Naive thymus-derived CD4-positive, alpha-beta T cell (primary cell): ENCODE measurements at regions of chr17 and their contacts with region 1.

Region 1: GRCh38 chr17:5249615-5250014 is 15.0 kb upstream of the SCIMP start:
- DNase-seq: peak in 8 of 9 donors; percentile 38 to 71 (median 64)
- ATAC-seq: peak; percentile 95
- H3K4me3 ChIP-seq: no peak overlapping the region
- H3K4me3 Mint-ChIP-seq: peak overlapping the region in 6 of 10 donors; percentile 4 to 21 (median 9)
- H3K27ac ChIP-seq: no peak overlapping the region
- H3K27ac Mint-ChIP-seq: peak overlapping the region in 8 of 9 donors; percentile 9 to 79 (median 53)
- H3K4me1 ChIP-seq: peaks cover 4 to 5% of the 10 kb centered on the region in 2 donors
- H3K4me1 Mint-ChIP-seq: peaks cover 1 to 17% (median 10%) of the 10 kb centered on the region in 7 donors
- H3K27me3 ChIP-seq: no peaks in the 10 kb centered on the region
- H3K27me3 Mint-ChIP-seq: no peaks in the 10 kb centered on the region

Region 2: DNA sequence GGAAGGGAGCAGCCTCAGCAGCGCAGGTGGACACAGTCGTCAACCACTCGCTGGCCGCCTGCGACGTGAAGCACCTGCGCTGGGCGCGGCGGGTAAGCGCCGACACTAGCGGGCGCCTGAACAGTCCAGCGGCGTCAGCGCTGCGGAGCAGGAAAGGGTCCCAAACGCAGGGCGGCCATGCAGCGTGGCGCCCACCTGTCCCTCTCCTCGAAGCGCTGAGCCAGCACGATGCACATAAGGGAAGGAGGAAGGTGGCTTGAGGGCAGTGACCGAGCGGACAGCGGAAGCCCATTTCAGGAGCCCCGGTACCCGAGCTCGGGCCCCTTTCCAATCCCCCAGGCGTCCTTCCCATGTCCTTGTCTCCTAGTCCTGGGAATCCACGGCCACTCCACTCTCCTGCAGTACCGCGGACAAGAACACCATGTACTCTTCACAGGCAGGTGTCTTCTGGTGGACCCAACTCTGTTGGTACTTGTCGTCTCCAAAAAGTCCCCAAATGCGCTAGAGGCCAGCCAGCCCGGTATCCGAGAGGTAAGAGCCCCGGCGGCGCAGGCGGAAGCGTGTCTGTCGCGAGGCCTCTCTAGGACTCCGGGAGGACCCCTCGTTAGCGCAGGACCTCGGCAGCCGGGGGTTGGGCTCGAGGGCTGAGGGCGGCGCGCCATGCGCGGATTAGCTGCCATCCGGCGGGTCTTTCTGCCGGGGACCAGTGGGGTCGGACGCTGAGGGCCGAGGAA is 152.3 kb before region 1 on chr17:
- CTCF ChIA-PET with region 1: no interaction called
- POLR2A ChIA-PET with region 1: no interaction called
- intact Hi-C with region 1: no loop called
- DNase-seq: peak in 7 of 9 donors; percentile 29 to 58 (median 48)
- ATAC-seq: peak; percentile 87
- H3K4me3 ChIP-seq: peak overlapping the region; percentile 59
- H3K4me3 Mint-ChIP-seq: peak overlapping the region; percentile 28 to 92 (median 89)
- H3K27ac ChIP-seq: no peak overlapping the region
- H3K27ac Mint-ChIP-seq: peak overlapping the region in 4 of 9 donors; percentile 25 to 59 (median 48)
- H3K4me1 ChIP-seq: no peaks in the 10 kb centered on the region
- H3K4me1 Mint-ChIP-seq: peaks cover 6 to 16% (median 12%) of the 10 kb centered on the region in 7 donors
- H3K27me3 ChIP-seq: no peaks in the 10 kb centered on the region
- H3K27me3 Mint-ChIP-seq: peaks cover 0 to 20% (median 0%) of the 10 kb centered on the region in 5 donors

Region 3: DNA sequence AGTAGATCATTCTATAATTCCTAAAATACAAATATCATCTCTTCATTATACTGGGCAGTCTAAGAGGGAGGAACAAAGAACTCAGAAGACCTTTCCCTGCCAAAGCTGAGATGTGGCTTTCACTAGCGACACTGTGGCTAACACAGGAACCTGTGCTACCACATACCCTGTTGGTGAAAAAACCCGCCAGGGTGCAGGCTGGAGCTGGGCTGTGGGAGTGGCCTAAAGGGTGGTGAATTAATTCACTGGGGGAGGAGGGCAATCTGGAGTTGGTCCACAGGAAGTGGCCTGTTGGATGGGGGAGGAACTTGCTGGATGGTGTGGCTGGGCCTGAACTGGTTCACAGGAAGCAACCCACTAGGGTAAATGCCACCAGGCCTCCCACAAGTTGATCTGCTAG is 65.3 kb before region 1 on chr17:
- CTCF ChIA-PET with region 1: no interaction called
- POLR2A ChIA-PET with region 1: no interaction called
- intact Hi-C with region 1: no loop called
- DNase-seq: no peak
- ATAC-seq: peak; percentile 75
- H3K4me3 ChIP-seq: no peak overlapping the region
- H3K4me3 Mint-ChIP-seq: no peak overlapping the region
- H3K27ac ChIP-seq: no peak overlapping the region
- H3K27ac Mint-ChIP-seq: no peak overlapping the region
- H3K4me1 ChIP-seq: no peaks in the 10 kb centered on the region
- H3K4me1 Mint-ChIP-seq: peaks cover 0 to 5% (median 0%) of the 10 kb centered on the region in 7 donors
- H3K27me3 ChIP-seq: no peaks in the 10 kb centered on the region
- H3K27me3 Mint-ChIP-seq: no peaks in the 10 kb centered on the region

Region 4: GRCh38 chr17:5304636-5305035 is 55.0 kb after region 1 on chr17:
- CTCF ChIA-PET with region 1: interaction called, 4 read pairs
- POLR2A ChIA-PET with region 1: no interaction called
- intact Hi-C with region 1: loop called in 1 of 2 experiments (anchors 1 kb)
- DNase-seq: no peak
- ATAC-seq: no peak
- H3K4me3 ChIP-seq: no peak overlapping the region
- H3K4me3 Mint-ChIP-seq: no peak overlapping the region
- H3K27ac ChIP-seq: no peak overlapping the region
- H3K27ac Mint-ChIP-seq: peak overlapping the region in 3 of 9 donors; percentile 62 to 72 (median 70)
- H3K4me1 ChIP-seq: peaks cover 0 to 9% of the 10 kb centered on the region in 2 donors
- H3K4me1 Mint-ChIP-seq: peaks cover 23 to 62% (median 51%) of the 10 kb centered on the region in 7 donors
- H3K27me3 ChIP-seq: no peaks in the 10 kb centered on the region
- H3K27me3 Mint-ChIP-seq: no peaks in the 10 kb centered on the region

Region 5: DNA sequence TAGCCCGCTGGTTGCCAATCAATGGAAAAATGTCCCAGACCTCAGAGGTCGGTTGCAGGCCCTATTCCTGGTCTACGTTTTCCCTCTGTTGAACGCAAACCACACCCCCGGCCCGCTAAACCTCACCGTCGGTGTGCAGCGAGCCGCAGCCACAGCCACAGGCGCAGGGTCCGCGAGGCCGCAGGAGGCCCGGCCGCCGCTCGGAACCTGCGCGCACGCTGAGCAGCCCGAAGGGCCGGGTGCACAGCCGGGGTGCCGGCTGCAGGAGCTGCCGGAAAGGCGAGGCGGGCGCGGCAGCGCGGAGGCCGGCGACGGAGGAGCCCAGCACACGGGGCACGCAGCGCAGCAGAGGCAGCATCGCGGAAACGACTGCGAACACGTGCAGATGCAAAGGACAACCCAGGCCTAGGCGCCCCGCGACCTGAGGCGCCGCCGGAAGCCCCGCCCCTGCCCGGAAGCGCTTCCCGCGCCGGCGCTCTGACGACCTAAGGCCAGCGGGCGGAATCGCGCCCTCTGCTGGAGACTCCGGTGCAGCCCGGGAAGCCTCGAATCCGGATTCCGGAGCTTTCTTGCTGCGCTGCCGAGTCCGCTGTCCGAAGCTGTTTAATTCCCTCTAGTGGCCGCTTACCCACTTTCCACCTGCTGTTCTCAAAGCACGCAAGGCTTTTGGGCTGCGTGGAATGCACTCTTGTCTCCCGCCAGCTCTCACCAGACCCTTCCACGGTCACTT is 189.3 kb after region 1 on chr17 and contains the start of gene C1QBP:
- CTCF ChIA-PET with region 1: interaction called, 4 read pairs
- POLR2A ChIA-PET with region 1: no interaction called
- intact Hi-C with region 1: loop called (anchors 1 kb)
- DNase-seq: peak; percentile 85 to 96 (median 91)
- ATAC-seq: peak; percentile 98
- H3K4me3 ChIP-seq: peak within 1 kb of the TSS; percentile 80
- H3K4me3 Mint-ChIP-seq: peak within 1 kb of the TSS; percentile 80 to 95 (median 90)
- H3K27ac ChIP-seq: peak within 1 kb of the TSS; percentile 89
- H3K27ac Mint-ChIP-seq: peak within 1 kb of the TSS; percentile 90 to 98 (median 94)
- H3K4me1 ChIP-seq: peaks cover 19 to 28% of the 10 kb centered on the region in 2 donors
- H3K4me1 Mint-ChIP-seq: peaks cover 16 to 43% (median 37%) of the 10 kb centered on the region in 7 donors
- H3K27me3 ChIP-seq: no peaks in the 10 kb centered on the region
- H3K27me3 Mint-ChIP-seq: no peaks in the 10 kb centered on the region
- total RNA-seq, gene C1QBP: 58.0 to 162 (median 82.3) TPM

Region 6: DNA sequence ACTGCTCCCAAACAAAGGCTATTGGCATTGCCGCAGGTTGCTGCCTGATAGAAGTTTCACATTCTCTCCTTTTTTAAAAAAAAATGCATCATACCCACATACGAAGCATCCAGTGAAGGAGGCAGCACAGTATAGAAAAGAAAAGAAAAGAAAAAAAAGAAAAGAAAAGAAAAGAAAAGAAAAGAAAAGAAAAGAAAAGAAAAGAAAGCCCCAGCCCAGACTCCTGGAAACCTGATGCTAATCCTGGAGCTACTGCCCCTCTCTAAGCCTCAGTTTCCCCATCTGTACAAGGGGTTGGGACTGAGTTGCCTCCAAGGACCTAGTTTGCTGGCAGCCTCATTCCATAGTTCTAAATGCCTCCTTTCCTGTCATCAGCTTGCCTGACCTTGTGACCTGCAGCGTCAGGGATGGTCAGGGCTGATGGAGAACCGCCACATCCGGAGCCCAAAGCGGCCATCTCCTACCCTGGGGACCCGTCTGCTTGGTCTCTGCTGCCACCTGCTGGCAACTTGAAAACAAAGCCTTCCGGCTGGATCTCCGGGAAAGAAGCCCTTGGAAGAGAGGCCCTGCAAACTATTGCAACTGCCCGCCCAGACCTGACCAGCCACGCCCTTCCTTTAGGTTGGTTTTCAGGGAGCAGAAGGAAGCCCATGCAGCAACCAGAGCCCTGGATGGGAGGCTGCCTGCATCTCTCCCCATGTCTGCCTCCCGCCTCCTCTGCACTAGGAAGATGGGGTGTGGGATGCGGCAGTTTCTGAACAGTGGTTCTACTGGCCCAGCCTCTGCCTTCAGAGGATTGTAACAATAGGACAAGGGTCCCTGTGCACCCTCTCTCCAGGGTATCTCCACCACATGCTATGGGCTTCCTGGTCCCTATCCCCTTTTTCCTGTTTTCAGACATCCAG is 1172.3 kb after region 1 on chr17:
- CTCF ChIA-PET with region 1: no interaction called
- POLR2A ChIA-PET with region 1: no interaction called
- intact Hi-C with region 1: loop called in 1 of 2 experiments (anchors 5 kb)
- DNase-seq: peak; percentile 28 to 74 (median 56)
- ATAC-seq: peak; percentile 89
- H3K4me3 ChIP-seq: no peak overlapping the region
- H3K4me3 Mint-ChIP-seq: no peak overlapping the region
- H3K27ac ChIP-seq: no peak overlapping the region
- H3K27ac Mint-ChIP-seq: peak overlapping the region in 1 of 9 donors; percentile 25
- H3K4me1 ChIP-seq: peaks cover 0 to 5% of the 10 kb centered on the region in 2 donors
- H3K4me1 Mint-ChIP-seq: peaks cover 1 to 8% (median 3%) of the 10 kb centered on the region in 7 donors
- H3K27me3 ChIP-seq: no peaks in the 10 kb centered on the region
- H3K27me3 Mint-ChIP-seq: peaks cover 0 to 57% (median 11%) of the 10 kb centered on the region in 5 donors